GM12878 (cell line): ENCODE measurements at regions of chr21 and their contacts with region 1.

Region 1: DNA sequence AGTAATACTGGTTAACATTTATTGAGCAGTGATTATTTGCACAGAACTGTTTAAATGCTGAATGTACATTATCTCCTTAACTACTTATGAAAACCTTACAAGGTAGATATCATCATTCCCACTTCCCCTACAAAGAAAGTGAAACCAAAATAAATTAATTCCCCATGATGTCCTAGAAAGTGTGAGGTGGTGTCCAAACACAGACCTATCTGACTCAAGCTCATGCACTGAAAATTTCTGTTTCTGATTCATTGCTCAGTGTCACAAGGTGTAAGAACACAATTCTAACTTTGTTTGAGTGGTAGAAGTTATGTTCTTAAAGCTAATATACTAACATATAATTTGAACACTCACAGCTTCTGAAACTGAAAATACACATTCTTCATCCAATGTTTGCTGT is 178.7 kb downstream of the MRPL39 start:
- DNase-seq: no peak
- ATAC-seq: peak; percentile 71
- H3K4me3 ChIP-seq: no peak overlapping the region
- H3K27ac ChIP-seq: peak overlapping the region; percentile 97
- H3K4me1 ChIP-seq: peaks cover 29% of the 10 kb centered on the region
- H3K27me3 ChIP-seq: no peaks in the 10 kb centered on the region
- CTCF ChIP-seq: no peak
- EP300 ChIP-seq: peak; percentile 34 to 71; a peak in 3 of 4 replicates
- POLR2A ChIP-seq: no peak
- RAD21 ChIP-seq: no peak

Region 2: DNA sequence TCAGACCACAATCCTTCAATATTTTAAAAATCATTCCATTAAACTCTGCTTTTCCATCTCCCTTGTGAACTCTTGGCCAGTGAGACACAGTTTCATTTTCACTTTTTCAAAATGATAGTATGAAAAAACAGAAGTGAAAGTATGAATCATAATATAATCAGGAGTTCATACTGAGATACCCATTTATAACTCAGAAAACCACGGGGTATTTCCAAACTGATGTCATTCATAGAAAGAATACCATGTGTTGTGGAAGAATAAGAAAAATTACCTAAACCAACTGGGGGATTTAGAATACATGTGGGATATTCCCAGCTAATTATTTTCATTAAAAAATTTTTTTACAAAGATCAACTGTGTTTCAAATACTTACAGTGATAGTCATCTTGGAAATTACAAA is 28.9 kb after region 1 on chr21:
- CTCF ChIA-PET with region 1: interaction called, 8 read pairs
- POLR2A ChIA-PET with region 1: interaction called, 51 read pairs
- RAD21 ChIA-PET with region 1: interaction called, 48 read pairs
- SMC1A ChIA-PET with region 1: interaction called, 61 read pairs
- in situ Hi-C with region 1: no loop called
- intact Hi-C with region 1: loop called (anchors 1 kb)
- DNase-seq: peak; percentile 83
- ATAC-seq: peak; percentile 60
- H3K4me3 ChIP-seq: no peak overlapping the region
- H3K27ac ChIP-seq: peak overlapping the region; percentile 98
- H3K4me1 ChIP-seq: peaks cover 52% of the 10 kb centered on the region
- H3K27me3 ChIP-seq: no peaks in the 10 kb centered on the region
- CTCF ChIP-seq: no peak
- EP300 ChIP-seq: peak; percentile 100
- POLR2A ChIP-seq: no peak
- RAD21 ChIP-seq: peak; percentile 25; the same call in 1 of the 2 replicates

Region 3: DNA sequence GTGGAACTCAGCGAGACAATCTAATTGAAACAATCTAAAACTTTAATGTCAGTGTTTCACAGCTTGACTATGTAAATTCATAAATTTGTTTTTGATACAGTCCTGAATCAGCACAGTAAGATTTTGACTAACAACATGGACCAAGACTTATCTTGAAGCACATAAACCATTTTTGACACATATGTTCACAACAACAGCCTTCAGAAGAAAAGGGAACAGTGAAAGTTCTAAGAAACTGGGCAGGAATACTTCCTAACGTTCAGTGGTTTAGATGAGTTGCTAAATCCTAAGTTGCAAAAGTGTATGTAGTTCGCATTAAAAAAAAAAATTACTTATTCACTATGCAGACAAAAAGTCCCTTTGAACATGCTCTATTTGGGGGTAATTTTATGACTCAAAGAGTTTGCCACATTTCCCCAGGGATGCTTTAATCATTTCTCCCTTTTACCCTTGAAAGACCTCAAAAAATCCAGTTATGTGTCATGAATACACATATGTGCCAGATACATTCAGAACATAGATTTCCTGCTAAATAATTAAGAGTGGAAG is 58.6 kb after region 1 on chr21:
- CTCF ChIA-PET with region 1: interaction called, 8 read pairs
- POLR2A ChIA-PET with region 1: interaction called, 5 read pairs
- RAD21 ChIA-PET with region 1: interaction called, 34 read pairs
- SMC1A ChIA-PET with region 1: interaction called, 84 read pairs
- in situ Hi-C with region 1: no loop called
- intact Hi-C with region 1: no loop called
- DNase-seq: peak; percentile 96
- ATAC-seq: peak; percentile 80
- H3K4me3 ChIP-seq: peak overlapping the region; percentile 11
- H3K27ac ChIP-seq: peak overlapping the region; percentile 85
- H3K4me1 ChIP-seq: peaks cover 46% of the 10 kb centered on the region
- H3K27me3 ChIP-seq: no peaks in the 10 kb centered on the region
- CTCF ChIP-seq: no peak
- EP300 ChIP-seq: peak; percentile 97 to 98
- POLR2A ChIP-seq: no peak
- RAD21 ChIP-seq: peak; percentile 37; the same call in 1 of the 2 replicates

Region 4: DNA sequence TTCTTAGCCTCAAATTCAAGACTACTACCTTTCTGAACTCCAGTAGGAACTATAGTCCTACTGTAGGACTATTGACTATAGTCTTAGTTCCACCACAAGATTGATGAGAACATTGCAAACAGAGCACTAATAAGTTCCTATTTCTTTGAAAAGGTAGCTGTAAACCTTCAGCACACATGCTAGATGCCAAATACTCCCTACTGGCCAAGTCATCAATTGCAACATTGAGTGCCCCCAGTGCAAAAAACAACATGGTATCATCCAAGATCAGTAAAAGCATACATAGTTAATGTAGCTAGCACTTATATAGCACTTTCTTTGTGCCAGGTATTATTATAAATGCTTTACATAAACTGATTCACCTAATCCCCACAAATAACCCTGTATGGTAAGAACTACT is 79.0 kb after region 1 on chr21:
- CTCF ChIA-PET with region 1: interaction called, 8 read pairs
- POLR2A ChIA-PET with region 1: interaction called, 4 read pairs
- RAD21 ChIA-PET with region 1: interaction called, 37 read pairs
- SMC1A ChIA-PET with region 1: interaction called, 49 read pairs
- in situ Hi-C with region 1: loop called (anchors 5 kb)
- intact Hi-C with region 1: loop called (anchors 1 kb)
- DNase-seq: no peak
- ATAC-seq: peak; percentile 57
- H3K4me3 ChIP-seq: no peak overlapping the region
- H3K27ac ChIP-seq: peak overlapping the region; percentile 95
- H3K4me1 ChIP-seq: peaks cover 41% of the 10 kb centered on the region
- H3K27me3 ChIP-seq: no peaks in the 10 kb centered on the region
- CTCF ChIP-seq: peak; percentile 19 to 52 (median 31); a peak in 4 of 6 replicates
- EP300 ChIP-seq: no peak
- POLR2A ChIP-seq: no peak
- RAD21 ChIP-seq: peak; percentile 60

Region 5: GRCh38 chr21:25573409-25574206 is 145.1 kb after region 1 on chr21:
- CTCF ChIA-PET with region 1: interaction called, 163 read pairs
- POLR2A ChIA-PET with region 1: interaction called, 16 read pairs
- RAD21 ChIA-PET with region 1: interaction called, 253 read pairs
- SMC1A ChIA-PET with region 1: interaction called, 426 read pairs
- in situ Hi-C with region 1: no loop called
- intact Hi-C with region 1: no loop called
- DNase-seq: peak; percentile 81
- ATAC-seq: peak; percentile 38
- H3K4me3 ChIP-seq: peak overlapping the region; percentile 14; the same call in 1 of the 2 replicates
- H3K27ac ChIP-seq: peak overlapping the region; percentile 92
- H3K4me1 ChIP-seq: peaks cover 38% of the 10 kb centered on the region
- H3K27me3 ChIP-seq: no peaks in the 10 kb centered on the region
- CTCF ChIP-seq: no peak
- EP300 ChIP-seq: no peak
- POLR2A ChIP-seq: peak; percentile 80
- RAD21 ChIP-seq: no peak

Region 6: GRCh38 chr21:25790122-25790877 is 361.8 kb after region 1 on chr21:
- CTCF ChIA-PET with region 1: no interaction called
- POLR2A ChIA-PET with region 1: no interaction called
- RAD21 ChIA-PET with region 1: no interaction called
- SMC1A ChIA-PET with region 1: no interaction called
- in situ Hi-C with region 1: no loop called
- intact Hi-C with region 1: no loop called
- DNase-seq: no peak
- ATAC-seq: peak; percentile 69
- H3K4me3 ChIP-seq: peak overlapping the region; percentile 38; the same call in 1 of the 2 replicates
- H3K27ac ChIP-seq: no peak overlapping the region
- H3K4me1 ChIP-seq: no peaks in the 10 kb centered on the region
- H3K27me3 ChIP-seq: no peaks in the 10 kb centered on the region
- CTCF ChIP-seq: peak; percentile 29 to 35 (median 32); a peak in 3 of 6 replicates
- EP300 ChIP-seq: no peak
- POLR2A ChIP-seq: no peak
- RAD21 ChIP-seq: peak; percentile 51; the same call in 1 of the 2 replicates